Ovary (tissue), 10 donors: ENCODE measurements at regions of chr2 and their contacts with region 1.

Region 1: GRCh38 chr2:55168221-55169154 is 63.6 kb downstream of the CLHC1 start:
- DNase-seq: peak; percentile 56 to 68 (median 63)
- H3K4me3 ChIP-seq: no peak overlapping the region
- H3K27ac ChIP-seq: peak overlapping the region in 1 of 2 donors; percentile 75
- H3K4me1 ChIP-seq: peaks cover 21% of the 10 kb centered on the region
- H3K27me3 ChIP-seq: no peaks in the 10 kb centered on the region
- CTCF ChIP-seq: peak; percentile 57 to 72 (median 63)
- EP300 ChIP-seq: no peak
- POLR2A ChIP-seq: no peak

Region 2: DNA sequence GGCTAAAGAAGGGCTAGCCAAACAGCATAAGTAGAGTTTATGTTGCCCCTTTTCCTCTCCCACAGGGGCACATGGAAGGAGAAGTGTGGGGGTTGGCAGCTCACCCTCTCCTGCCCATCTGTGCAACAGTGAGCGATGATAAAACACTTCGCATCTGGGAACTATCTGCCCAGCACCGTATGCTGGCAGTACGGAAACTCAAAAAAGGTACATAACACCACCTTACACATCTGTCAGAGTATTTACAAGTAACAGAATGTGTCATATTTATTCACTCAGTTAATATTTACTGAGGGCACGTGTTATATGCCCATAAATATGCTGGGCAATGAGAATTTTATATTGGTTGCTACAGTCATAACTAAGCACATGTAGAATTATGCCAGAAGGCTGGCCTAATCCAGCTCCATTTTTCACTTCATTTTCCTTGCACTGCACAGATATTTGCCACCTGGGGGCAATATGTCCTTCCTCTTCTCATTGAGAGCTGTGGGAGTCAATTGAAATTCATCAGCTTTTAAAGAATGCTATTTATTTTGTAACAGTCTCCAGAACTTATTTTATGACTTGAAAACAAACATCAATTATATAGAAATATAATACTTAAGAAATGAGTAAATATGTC is 268.8 kb before region 1 on chr2:
- intact Hi-C with region 1: loop called in 3 of 4 experiments (anchors 10 kb)
- DNase-seq: peak in 1 of 5 donors; percentile 22
- H3K4me3 ChIP-seq: no peak overlapping the region
- H3K27ac ChIP-seq: no peak overlapping the region
- H3K4me1 ChIP-seq: no peaks in the 10 kb centered on the region
- H3K27me3 ChIP-seq: no peaks in the 10 kb centered on the region
- CTCF ChIP-seq: peak; percentile 15 to 69 (median 58)
- EP300 ChIP-seq: no peak
- POLR2A ChIP-seq: no peak

Region 3: DNA sequence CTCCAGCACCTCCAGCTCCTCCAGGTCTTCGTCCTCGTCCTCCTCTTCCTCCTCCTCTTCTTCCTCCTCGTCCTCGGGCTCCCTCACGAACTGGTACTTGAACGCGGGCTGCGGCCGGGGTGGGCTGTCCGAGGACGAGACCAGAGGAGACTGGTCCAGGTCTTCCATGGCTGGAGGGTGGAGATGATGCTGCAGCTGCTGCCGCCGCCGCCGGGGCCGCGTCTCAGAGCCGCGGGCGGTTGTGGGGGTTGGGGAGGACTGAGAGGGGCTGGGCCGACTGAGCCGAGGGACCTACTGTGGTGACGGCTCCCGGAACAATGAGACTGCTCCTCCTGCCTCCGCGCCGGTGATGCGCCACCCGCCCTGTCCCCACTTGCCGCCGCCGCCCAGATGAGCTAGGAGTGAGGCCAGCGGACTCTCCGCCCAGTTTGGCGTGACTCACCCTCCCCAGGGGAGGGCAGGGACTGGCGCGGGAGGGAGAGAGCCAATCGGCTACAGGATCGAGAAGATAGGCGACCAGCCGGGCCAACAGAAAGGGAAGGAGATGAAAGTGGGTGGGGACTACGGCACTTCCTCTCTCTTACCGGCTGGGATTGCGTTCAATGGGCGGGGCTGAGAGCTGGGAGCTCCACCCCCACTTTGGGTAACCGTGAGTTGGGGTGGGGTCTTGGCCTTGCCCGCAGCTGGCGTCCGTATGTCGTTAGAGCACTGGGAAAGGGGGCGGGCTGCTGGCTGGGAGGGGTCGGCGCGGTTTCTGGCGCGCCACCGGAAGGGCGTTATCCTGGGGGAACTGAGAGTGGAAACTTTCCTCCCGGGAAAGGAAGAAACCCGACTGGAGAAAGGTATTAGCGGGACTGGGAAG is 118.1 kb before region 1 on chr2 and contains the start of gene RTN4:
- intact Hi-C with region 1: loop called in 3 of 4 experiments (anchors 5 kb)
- DNase-seq: peak; percentile 97 to 99 (median 98)
- H3K4me3 ChIP-seq: peak within 1 kb of the TSS; percentile 84
- H3K27ac ChIP-seq: peak within 1 kb of the TSS; percentile 92 to 99
- H3K4me1 ChIP-seq: peaks cover 6% of the 10 kb centered on the region
- H3K27me3 ChIP-seq: no peaks in the 10 kb centered on the region
- CTCF ChIP-seq: peak in 2 of 3 donors; percentile 8 to 27
- EP300 ChIP-seq: no peak
- POLR2A ChIP-seq: peak; percentile 98
- total RNA-seq, gene RTN4: 118 to 275 (median 200) TPM

Region 4: DNA sequence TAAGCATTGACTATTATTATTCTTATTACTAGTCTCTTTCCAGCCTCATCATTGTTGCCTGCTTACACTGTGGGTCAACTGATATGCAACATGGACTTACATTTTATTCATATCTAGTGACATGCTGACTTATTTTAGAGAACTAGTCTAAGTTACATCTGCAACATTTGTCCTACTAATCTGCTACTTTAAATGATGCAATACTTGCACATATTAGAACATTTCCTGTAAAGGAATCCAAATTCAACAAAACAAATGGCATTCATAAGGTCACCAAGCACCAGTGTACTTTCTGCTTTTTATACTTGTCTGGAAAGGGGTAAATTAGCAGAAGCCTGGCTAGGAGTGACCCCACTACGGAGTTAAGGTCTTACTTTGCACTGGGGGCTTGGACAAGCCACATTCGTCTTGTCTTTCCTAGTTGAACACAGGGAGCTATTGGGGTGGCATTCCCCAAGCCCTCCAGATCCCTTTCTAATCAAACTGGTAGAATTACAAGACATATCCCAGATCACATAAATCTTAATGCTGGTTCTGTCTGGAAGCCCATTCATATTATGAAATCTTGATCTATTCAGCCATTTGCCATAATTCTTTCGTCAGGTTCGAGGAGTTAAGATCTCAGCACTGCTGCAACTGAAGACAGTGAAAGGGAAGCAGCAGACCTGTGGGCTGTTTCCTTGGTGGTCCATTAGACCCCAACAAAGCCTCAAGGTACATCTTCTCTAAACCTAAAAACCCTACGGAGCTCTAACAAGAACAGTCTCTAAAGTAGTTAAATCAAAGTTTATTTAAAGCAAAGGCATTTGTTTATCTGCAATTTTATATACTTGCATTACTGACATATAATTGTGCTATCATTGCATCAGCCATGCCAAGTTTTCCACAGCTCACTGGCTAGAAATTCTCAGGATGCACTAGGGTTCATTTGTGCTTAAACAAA is 68.3 kb before region 1 on chr2:
- intact Hi-C with region 1: loop called in 1 of 4 experiments (anchors 10 kb)
- DNase-seq: no peak
- H3K4me3 ChIP-seq: no peak overlapping the region
- H3K27ac ChIP-seq: peak overlapping the region in 1 of 2 donors; percentile 2
- H3K4me1 ChIP-seq: peaks cover 16% of the 10 kb centered on the region
- H3K27me3 ChIP-seq: no peaks in the 10 kb centered on the region
- CTCF ChIP-seq: no peak
- EP300 ChIP-seq: no peak
- POLR2A ChIP-seq: no peak

Region 5: DNA sequence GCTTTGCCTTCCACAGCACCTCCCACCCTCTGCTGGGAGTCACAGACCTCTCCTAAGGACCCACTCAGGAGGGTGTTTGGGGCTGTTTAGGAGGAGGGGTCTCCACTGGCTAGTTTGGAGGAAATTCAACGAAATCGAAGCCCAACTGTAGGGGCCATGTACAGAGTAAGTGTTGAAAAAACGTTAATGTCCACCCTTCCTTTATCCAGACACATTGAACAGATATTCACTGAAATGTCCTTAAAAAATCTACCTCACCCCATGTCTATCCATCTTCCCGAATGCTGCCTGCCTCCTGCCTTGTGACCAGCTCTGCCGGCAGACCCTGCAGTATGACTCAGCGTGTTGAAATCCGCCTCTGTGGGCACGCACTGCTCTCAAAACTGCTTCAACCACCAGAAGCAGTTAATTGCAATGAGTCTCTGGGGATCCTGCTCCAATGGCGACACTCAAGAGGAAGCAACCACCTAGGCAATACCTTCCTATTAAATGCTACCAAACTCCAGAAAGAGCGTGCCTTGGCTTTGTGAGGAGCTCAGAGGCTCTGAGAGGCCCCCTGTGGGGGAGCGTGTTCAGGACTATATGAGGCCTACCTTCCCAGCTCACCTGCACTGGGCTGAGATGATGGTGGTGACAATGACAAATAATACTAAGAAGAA is 56.8 kb before region 1 on chr2:
- intact Hi-C with region 1: loop called in 2 of 4 experiments (anchors 10 kb)
- DNase-seq: peak; percentile 54 to 67 (median 62)
- H3K4me3 ChIP-seq: no peak overlapping the region
- H3K27ac ChIP-seq: peak overlapping the region in 1 of 2 donors; percentile 82
- H3K4me1 ChIP-seq: peaks cover 12% of the 10 kb centered on the region
- H3K27me3 ChIP-seq: no peaks in the 10 kb centered on the region
- CTCF ChIP-seq: no peak
- EP300 ChIP-seq: no peak
- POLR2A ChIP-seq: no peak

Region 6: GRCh38 chr2:55239656-55240222 is 71.3 kb after region 1 on chr2:
- intact Hi-C with region 1: no loop called
- DNase-seq: no peak
- H3K4me3 ChIP-seq: no peak overlapping the region
- H3K27ac ChIP-seq: no peak overlapping the region
- H3K4me1 ChIP-seq: no peaks in the 10 kb centered on the region
- H3K27me3 ChIP-seq: no peaks in the 10 kb centered on the region
- CTCF ChIP-seq: no peak
- EP300 ChIP-seq: no peak
- POLR2A ChIP-seq: no peak